Naive thymus-derived CD4-positive, alpha-beta T cell (primary cell): ENCODE measurements at regions of chr4 and their contacts with region 1.

Region 1: GRCh38 chr4:87103691-87104187 is 116.7 kb downstream of the KLHL8 start:
- DNase-seq: peak in 7 of 9 donors; percentile 45 to 83 (median 64)
- ATAC-seq: peak; percentile 87
- H3K4me3 ChIP-seq: no peak overlapping the region
- H3K4me3 Mint-ChIP-seq: peak overlapping the region; percentile 24 to 81 (median 69)
- H3K27ac ChIP-seq: peak overlapping the region; percentile 56
- H3K27ac Mint-ChIP-seq: peak overlapping the region; percentile 65 to 99 (median 92)
- H3K4me1 ChIP-seq: peaks cover 13 to 23% of the 10 kb centered on the region in 2 donors
- H3K4me1 Mint-ChIP-seq: peaks cover 26 to 75% (median 60%) of the 10 kb centered on the region in 7 donors
- H3K27me3 ChIP-seq: no peaks in the 10 kb centered on the region
- H3K27me3 Mint-ChIP-seq: no peaks in the 10 kb centered on the region

Region 2: DNA sequence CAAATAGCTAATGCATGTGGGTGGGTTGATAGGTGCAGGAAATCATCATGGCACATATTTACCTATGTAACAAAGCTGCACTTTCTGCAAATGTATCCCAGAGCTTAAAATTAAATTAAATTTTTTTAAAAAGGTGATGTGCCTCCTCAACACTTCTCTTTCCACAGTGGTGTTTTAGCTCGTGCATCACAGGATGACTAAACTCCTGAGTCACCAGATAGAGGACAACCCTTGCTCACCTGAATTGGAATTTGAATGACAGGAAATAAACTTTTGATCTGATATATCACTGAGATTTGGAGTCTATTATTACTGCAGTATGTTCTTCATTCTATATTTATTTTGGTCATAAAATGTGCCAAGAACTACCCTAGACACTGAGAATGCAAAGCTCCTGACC is 929.2 kb before region 1 on chr4:
- CTCF ChIA-PET with region 1: no interaction called
- POLR2A ChIA-PET with region 1: no interaction called
- intact Hi-C with region 1: no loop called
- DNase-seq: no peak
- ATAC-seq: no peak
- H3K4me3 ChIP-seq: no peak overlapping the region
- H3K4me3 Mint-ChIP-seq: no peak overlapping the region
- H3K27ac ChIP-seq: no peak overlapping the region
- H3K27ac Mint-ChIP-seq: no peak overlapping the region
- H3K4me1 ChIP-seq: no peaks in the 10 kb centered on the region
- H3K4me1 Mint-ChIP-seq: no peaks in the 10 kb centered on the region
- H3K27me3 ChIP-seq: no peaks in the 10 kb centered on the region
- H3K27me3 Mint-ChIP-seq: no peaks in the 10 kb centered on the region

Region 3: GRCh38 chr4:87093443-87094123 is 10.2 kb before region 1 on chr4:
- CTCF ChIA-PET with region 1: interaction called, 15 read pairs
- POLR2A ChIA-PET with region 1: interaction called, 4 read pairs
- intact Hi-C with region 1: no loop called
- DNase-seq: peak in 7 of 9 donors; percentile 26 to 60 (median 51)
- ATAC-seq: peak; percentile 90
- H3K4me3 ChIP-seq: no peak overlapping the region
- H3K4me3 Mint-ChIP-seq: no peak overlapping the region
- H3K27ac ChIP-seq: no peak overlapping the region
- H3K27ac Mint-ChIP-seq: peak overlapping the region; percentile 26 to 91 (median 74)
- H3K4me1 ChIP-seq: no peaks in the 10 kb centered on the region
- H3K4me1 Mint-ChIP-seq: peaks cover 10 to 47% (median 25%) of the 10 kb centered on the region in 7 donors
- H3K27me3 ChIP-seq: no peaks in the 10 kb centered on the region
- H3K27me3 Mint-ChIP-seq: no peaks in the 10 kb centered on the region